Lower leg skin (tissue), 4 donors: ENCODE measurements at regions of chr11 and their contacts with region 1.

Region 1: DNA sequence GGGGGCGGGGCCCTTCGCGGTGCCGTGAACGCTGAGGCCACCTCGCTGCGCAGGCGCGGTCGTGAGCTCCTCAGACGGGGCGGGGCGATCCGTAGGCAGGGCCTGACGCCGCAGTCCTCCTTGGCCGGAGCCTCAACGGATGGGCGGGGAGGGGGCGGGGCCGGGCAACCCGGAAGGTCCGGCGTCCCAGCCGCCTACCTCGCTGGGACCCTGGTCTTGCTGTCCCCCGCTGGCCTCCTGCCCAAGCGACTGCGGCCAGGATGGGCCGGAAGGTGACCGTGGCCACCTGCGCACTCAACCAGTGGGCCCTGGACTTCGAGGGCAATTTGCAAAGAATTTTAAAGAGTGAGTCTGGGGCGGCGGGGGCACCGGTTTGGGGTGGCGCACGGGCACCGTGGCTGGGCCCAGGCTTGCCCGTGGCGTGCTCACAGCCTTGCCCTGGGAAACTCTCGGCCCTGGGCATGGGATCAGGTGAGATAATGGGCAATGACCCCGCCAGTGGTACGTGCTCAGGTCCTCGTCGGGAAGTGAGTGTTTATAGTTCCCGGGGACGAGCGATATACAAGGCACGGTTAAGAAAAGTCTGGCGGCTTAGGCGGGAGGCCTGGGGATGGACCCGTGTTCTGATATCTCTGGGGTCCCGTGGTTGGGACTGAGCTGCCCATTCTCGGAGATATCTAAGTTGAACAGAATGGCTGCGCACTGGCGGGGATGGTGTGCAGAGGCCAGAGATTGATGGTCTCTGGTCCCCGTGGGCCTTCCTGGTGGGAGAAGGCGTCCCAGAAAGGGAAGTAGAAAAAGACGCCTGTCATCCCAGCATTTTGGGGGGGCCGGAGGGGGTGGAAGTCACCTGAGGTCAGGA is at the start of gene NADSYN1:
- DNase-seq: peak; percentile 94 to 99
- H3K4me3 ChIP-seq: peak within 1 kb of the TSS; percentile 87
- CTCF ChIP-seq: no peak
- POLR2A ChIP-seq: no peak
- total RNA-seq, gene NADSYN1: 41.2 to 67.2 (median 59.8) TPM

Region 2: GRCh38 chr11:70818351-70818750 is 634.9 kb before region 1 on chr11:
- intact Hi-C with region 1: loop called (anchors 10 kb)
- DNase-seq: no peak
- H3K4me3 ChIP-seq: no peak overlapping the region
- CTCF ChIP-seq: no peak
- POLR2A ChIP-seq: no peak